MCF 10A (cell line): ENCODE measurements at regions of chr5 and their contacts with region 1.

Region 1: DNA sequence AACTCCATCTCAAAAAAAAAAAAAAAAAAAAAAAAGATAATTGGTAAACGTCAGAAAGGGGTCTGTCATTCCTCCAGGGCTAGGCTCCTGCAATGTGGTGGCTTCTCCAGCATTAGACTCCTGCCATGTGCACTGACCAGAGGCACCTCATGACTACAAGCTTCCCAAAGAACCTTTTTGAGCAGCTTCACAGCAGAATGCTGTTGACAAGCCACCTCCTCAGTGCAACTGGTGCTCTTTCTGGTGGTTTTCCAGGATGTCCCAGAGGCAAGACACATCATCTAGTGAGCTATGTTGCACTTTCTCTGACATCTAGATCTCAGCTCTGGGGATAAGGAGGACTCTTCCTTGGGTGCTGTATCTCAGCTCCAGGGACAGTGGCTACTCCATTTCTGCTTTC is 11.6 kb downstream of the RPL37 start:
- DNase-seq: no peak
- H3K4me3 Mint-ChIP-seq: no peak overlapping the region
- H3K27ac Mint-ChIP-seq: no peak overlapping the region
- H3K4me1 Mint-ChIP-seq: peaks cover 5% of the 10 kb centered on the region
- H3K27me3 Mint-ChIP-seq: no peaks in the 10 kb centered on the region
- CTCF ChIP-seq: no peak

Region 2: DNA sequence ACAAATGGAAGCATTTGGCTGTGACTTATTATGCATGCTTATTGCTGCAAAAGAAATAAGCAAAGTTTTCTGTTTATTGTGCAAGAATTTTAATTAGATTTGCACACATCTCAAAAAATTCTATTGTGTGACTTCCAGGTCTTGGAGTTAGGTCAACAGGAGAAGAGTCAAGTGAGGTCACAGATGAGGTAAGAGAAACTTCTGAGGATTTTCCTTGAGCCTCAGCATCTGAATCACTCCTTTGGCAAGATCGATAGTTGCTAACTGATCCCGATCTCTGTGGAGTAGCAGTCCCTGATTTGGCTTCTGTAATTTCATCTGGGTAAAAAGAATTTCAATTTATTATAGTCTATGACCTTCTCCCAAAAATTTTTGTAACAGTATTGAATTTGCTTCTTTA is 60.8 kb before region 1 on chr5:
- CTCF ChIA-PET with region 1: no interaction called
- POLR2A ChIA-PET with region 1: no interaction called
- intact Hi-C with region 1: no loop called
- DNase-seq: no peak
- H3K4me3 Mint-ChIP-seq: no peak overlapping the region
- H3K27ac Mint-ChIP-seq: no peak overlapping the region
- H3K4me1 Mint-ChIP-seq: no peaks in the 10 kb centered on the region
- H3K27me3 Mint-ChIP-seq: no peaks in the 10 kb centered on the region
- CTCF ChIP-seq: no peak

Region 3: GRCh38 chr5:40834849-40835787 is 11.7 kb after region 1 on chr5 and contains the start of gene RPL37:
- CTCF ChIA-PET with region 1: no interaction called
- POLR2A ChIA-PET with region 1: interaction called, 50 read pairs
- intact Hi-C with region 1: no loop called
- DNase-seq: peak; percentile 97
- H3K4me3 Mint-ChIP-seq: peak within 1 kb of the TSS; percentile 98
- H3K27ac Mint-ChIP-seq: peak within 1 kb of the TSS; percentile 98
- H3K4me1 Mint-ChIP-seq: peaks cover 17% of the 10 kb centered on the region
- H3K27me3 Mint-ChIP-seq: no peaks in the 10 kb centered on the region
- CTCF ChIP-seq: no peak
- total RNA-seq, gene RPL37: 2,063 and 2,180 TPM in 2 replicates